Right ventricle myocardium inferior (tissue), 1 donor: ENCODE measurements at regions of chr1 and their contacts with region 1.

Region 1: DNA sequence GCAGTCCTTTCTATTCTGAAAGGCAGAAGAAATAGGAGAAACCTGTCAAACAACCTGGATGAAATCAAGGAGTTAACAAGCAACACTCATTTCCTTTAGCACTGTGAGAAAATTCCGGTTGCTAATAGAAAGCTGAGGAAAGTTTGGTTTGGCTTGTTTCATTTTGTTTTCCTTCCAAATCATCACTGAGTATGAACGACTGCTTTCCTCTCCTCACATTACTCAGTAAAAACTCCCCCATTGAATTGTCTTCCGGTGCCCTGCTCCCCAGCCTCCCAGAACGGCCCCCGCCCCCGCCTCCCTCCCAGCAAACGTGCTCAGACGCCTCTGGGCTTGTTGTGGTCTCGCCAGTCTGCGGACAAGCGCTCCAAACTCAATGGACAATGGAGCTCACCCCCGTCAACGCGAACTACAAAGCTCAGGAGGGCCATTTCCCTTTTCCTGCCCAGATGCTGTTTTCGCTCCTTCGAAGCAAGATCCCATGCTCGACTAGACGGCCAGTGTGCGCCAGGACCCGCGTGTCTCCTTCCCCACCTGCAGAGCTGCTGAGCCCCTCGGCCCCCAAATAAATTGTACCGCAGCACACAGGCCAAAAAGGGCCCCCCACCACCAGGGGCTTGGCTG is 747 bp downstream of the STX6 start:
- DNase-seq: peak; percentile 74
- ATAC-seq: peak; percentile 56

Region 2: GRCh38 chr1:180881806-180882509 is 140.0 kb before region 1 on chr1:
- intact Hi-C with region 1: loop called (anchors 5 kb)
- DNase-seq: no peak
- ATAC-seq: peak; percentile 45

Region 3: DNA sequence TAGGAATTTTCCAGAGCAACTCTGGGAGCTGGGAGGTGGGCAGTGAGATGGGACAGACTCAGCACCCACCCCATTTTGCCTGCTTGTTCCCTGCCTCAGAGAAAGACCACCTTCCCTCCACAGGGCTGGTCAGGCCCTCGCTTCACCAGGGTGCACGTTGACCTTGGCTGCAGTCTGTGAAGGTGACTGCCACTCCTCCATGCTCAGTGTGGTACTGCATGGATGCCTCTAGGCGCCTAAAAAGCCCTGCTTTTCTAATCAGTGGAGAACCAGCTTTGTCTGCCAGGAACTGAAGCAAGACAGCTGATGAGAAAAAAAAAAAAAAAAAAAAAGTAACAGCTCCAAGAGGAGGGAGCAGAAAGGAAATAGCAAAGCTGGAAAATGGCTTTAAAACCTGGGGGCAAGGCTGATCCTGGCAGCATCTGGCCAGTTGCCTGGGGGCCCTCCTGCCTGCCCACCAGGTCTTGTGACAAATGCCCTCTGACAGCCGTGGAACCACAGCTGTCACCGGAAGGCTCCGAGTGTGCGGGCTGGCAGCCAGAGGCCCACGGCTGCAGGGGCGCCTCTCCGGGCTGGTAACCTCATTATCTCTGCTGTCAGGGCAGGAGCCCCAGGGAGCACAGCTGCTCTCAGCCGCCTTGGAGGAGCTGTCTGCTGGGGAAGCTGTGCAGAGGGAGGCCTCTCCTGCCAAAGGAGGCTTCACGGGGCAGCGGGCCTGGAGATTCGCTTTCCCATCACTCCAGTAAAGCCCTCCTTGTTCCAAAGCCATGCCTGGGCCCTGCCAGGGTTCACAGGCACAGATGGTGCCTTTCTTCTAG is 95.5 kb before region 1 on chr1:
- intact Hi-C with region 1: loop called (anchors 5 kb)
- DNase-seq: peak; percentile 86
- ATAC-seq: peak; percentile 81